Posterior cingulate gyrus (tissue), 11 donors: ENCODE measurements at regions of chr11 and their contacts with region 1.

Region 1: GRCh38 chr11:76048763-76049162 is 157.5 kb downstream of the WNT11 start:
- DNase-seq: no peak

Region 2: GRCh38 chr11:76302996-76303395 is 254.2 kb after region 1 on chr11:
- intact Hi-C with region 1: loop called (anchors 5 kb)
- DNase-seq: no peak